ENCODE measurements at regions of chr14 and their contacts with region 1.

Region 1: DNA sequence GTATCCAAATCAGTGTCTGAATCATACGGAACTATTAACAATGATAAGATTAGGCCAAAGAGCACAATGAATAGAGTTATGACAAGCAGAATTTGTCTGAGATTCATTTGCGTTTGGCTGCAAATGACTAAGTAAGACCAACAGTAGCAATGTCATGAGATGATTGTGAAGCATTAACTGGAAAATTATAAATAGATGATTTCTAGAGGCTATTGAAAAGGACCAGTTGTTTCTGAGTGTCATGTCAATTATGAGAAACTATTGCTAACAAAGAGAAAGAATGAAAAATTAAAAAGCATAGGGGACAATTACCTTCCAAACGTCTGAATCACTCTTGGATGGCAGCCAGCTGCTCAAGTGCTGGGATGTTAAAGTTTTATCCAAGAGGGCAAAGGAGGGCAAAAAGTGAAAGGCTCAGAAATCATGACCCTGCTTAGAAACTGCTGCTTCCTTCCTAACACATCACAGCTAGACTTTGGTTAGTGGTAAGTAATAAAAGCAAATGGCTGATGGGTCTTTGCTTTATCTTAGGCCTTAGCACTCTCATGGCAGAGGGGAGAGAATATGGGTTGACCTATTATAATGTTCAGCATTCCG is 89.0 kb downstream of the AKAP6 start:
- DNase-seq: peak in 3 of 5 donors; percentile 24 to 62 (median 51)
- ATAC-seq: peak; percentile 18 to 50 (median 40)
- H3K4me3 ChIP-seq: peak overlapping the region in 9 of 12 donors; percentile 8 to 50 (median 36)
- H3K27ac ChIP-seq: peak overlapping the region; percentile 56 to 85 (median 76)
- H3K4me1 ChIP-seq: peaks cover 0 to 29% (median 11%) of the 10 kb centered on the region in 12 donors
- H3K27me3 ChIP-seq: no peaks in the 10 kb centered on the region
- CTCF ChIP-seq: no peak
- POLR2A ChIP-seq: no peak

Region 2: DNA sequence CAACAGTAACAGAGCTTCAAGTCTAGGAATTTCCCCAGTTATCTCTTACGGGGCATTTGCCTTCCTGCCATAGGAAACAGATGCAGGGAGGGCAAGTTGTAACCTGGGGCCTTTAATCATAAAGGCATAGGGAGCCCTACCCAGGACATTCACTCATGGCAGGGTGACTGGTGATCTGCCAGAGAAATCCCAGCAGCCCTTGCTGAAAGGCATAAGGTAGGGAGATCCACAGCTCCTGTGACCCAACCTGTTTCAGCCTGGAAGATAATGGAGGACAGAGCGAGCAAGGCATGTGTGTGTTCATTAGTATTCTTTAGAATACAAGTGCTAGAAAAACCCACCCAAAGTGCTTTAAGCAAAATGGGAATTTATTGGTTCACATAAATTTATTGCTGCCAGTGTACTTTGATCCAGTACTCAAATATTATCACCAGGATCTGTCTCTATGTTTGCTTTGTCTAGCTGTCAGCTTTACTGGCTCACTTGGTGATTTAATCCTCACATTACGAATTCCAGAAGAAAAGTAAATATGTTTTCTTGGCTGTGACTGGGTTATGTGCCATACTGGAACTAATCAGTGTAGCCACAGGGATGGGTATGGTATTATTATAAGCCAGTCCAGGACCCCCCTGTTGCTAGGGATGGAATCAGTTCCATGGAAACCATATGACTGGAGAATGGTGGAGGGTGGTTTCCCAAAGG is 110.0 kb before region 1 on chr14:
- intact Hi-C with region 1: no loop called
- DNase-seq: no peak
- ATAC-seq: no peak
- H3K4me3 ChIP-seq: no peak overlapping the region
- H3K27ac ChIP-seq: no peak overlapping the region
- H3K4me1 ChIP-seq: peaks cover 0 to 15% (median 2%) of the 10 kb centered on the region in 12 donors
- H3K27me3 ChIP-seq: no peaks in the 10 kb centered on the region
- CTCF ChIP-seq: no peak
- POLR2A ChIP-seq: no peak

Region 3: GRCh38 chr14:32457213-32457920 is 39.3 kb after region 1 on chr14:
- intact Hi-C with region 1: loop called in 4 of 10 experiments (anchors 5 kb)
- DNase-seq: peak in 4 of 5 donors; percentile 69 to 86 (median 78)
- ATAC-seq: peak; percentile 96 to 99 (median 99)
- H3K4me3 ChIP-seq: no peak overlapping the region
- H3K27ac ChIP-seq: peak overlapping the region; percentile 34 to 89 (median 80)
- H3K4me1 ChIP-seq: peaks cover 0 to 23% (median 9%) of the 10 kb centered on the region in 12 donors
- H3K27me3 ChIP-seq: no peaks in the 10 kb centered on the region
- CTCF ChIP-seq: no peak
- POLR2A ChIP-seq: no peak

Measured in heart left ventricle (tissue), 16 donors.